Activated B cell treated with CpG ODN at 0.5 μM for 24 hours (primary cell): ENCODE measurements at regions of chr2 and their contacts with region 1.

Region 1: GRCh38 chr2:131105156-131105949 is at the start of gene PLEKHB2:
- DNase-seq: peak; percentile 97
- ATAC-seq: peak; percentile 84
- H3K4me3 Mint-ChIP-seq: peak within 1 kb of the TSS; percentile 96
- H3K27ac Mint-ChIP-seq: peak within 1 kb of the TSS; percentile 91
- H3K4me1 Mint-ChIP-seq: peaks cover 34% of the 10 kb centered on the region
- H3K27me3 Mint-ChIP-seq: no peaks in the 10 kb centered on the region
- CTCF ChIP-seq: no peak
- total RNA-seq, gene PLEKHB2: 32.3 and 33.6 TPM in 2 replicates

Region 2: DNA sequence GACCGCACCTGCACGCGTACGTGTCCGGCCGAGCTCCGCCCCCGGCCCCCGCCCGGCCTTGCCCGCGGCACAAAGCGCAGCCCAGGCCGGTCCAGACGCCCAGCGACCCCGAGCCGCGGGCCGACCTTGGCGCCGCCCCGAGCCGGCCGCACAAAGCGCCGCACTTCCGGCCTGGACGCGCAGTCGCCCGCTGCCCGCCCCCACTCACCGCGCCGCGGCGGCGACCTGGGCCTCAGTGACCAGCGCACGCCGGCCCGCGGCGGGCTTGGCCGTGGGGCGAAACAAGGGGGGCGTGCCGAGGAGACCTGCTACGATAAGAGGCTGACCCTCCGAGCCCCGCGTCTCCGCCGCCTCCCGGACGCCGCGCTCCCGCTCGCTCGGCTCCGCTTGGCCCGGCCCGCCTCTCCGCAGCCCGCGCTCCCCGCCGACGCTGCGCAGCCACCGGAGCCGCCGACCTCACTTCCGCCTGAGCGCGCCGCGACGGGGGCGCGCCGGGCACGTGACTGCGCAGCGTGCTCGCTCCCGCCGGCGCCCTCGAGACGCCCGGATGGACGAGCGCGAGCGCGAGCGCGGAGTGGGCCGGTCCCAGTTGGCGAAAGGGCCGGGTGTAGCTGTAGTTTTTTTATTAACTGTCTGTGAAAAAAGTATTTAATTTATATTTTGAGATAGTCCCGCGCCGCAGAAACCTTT is 12.2 kb before region 1 on chr2 and contains the start of gene FAM168B:
- CTCF ChIA-PET with region 1: interaction called, 5 read pairs
- POLR2A ChIA-PET with region 1: interaction called, 82 read pairs
- intact Hi-C with region 1: loop called (anchors 1 kb)
- DNase-seq: peak; percentile 96
- ATAC-seq: peak; percentile 78
- H3K4me3 Mint-ChIP-seq: peak within 1 kb of the TSS; percentile 97
- H3K27ac Mint-ChIP-seq: peak within 1 kb of the TSS; percentile 98
- H3K4me1 Mint-ChIP-seq: peaks cover 22% of the 10 kb centered on the region
- H3K27me3 Mint-ChIP-seq: no peaks in the 10 kb centered on the region
- CTCF ChIP-seq: no peak
- total RNA-seq, gene FAM168B: 59.9 and 62.5 TPM in 2 replicates

Region 3: GRCh38 chr2:131682122-131682944 is 577.0 kb after region 1 on chr2:
- CTCF ChIA-PET with region 1: no interaction called
- POLR2A ChIA-PET with region 1: no interaction called
- intact Hi-C with region 1: loop called (anchors 2 kb)
- DNase-seq: peak; percentile 59
- ATAC-seq: peak; percentile 99
- H3K4me3 Mint-ChIP-seq: peak overlapping the region; percentile 89
- H3K27ac Mint-ChIP-seq: peak overlapping the region; percentile 82
- H3K4me1 Mint-ChIP-seq: peaks cover 29% of the 10 kb centered on the region
- H3K27me3 Mint-ChIP-seq: no peaks in the 10 kb centered on the region
- CTCF ChIP-seq: no peak